T-cell (primary cell): ENCODE measurements at regions of chr10 and their contacts with region 1.

Region 1: DNA sequence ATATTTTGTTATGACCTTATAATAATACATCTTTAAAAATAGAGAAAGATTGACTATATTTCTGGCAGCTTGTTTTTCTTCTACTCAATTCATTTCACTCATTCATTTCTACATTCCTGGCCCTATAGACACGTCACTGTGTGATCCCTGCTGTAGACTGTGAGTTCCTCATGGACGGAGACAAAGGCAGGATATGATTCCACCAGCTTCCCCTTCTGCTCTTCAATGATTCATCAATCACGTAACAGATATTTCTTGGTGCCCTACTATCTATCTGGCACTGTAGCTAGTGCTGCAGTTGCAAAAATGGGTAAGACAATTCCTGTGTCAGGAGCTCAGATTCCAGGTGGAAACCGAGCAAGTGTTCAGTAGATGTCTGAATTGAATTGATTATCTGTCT is 415.0 kb downstream of the SFMBT2 start:
- DNase-seq: no peak
- ATAC-seq: no peak
- H3K4me3 ChIP-seq: no peak overlapping the region
- H3K4me3 Mint-ChIP-seq: no peak overlapping the region
- H3K27ac ChIP-seq: no peak overlapping the region
- H3K27ac Mint-ChIP-seq: no peak overlapping the region
- H3K4me1 ChIP-seq: peaks cover 0 to 13% of the 10 kb centered on the region in 2 experiments
- H3K4me1 Mint-ChIP-seq: peaks cover 2 to 4% (median 4%) of the 10 kb centered on the region in 3 donors
- H3K27me3 ChIP-seq: no peaks in the 10 kb centered on the region
- H3K27me3 Mint-ChIP-seq: peaks cover 6 to 7% of the 10 kb centered on the region in 2 donors

Region 2: DNA sequence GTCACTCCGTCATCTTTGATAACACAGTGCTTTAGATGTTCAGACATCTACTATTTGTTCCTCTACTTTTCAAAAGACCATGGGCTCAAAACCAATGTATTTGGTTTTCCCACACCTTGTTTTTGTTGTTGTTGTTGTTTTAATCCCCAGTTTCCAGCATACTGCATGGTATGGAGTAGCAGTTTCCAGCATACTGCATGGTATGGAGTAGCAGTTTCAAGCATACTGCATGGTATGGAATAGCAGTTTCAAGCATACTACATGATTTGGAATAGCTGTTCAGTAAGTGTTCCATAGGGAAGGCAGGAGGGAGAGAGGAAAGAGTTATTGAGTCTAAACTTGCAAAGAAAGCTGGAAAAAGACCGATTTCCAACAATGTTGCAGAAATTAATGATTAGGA is 101.4 kb before region 1 on chr10:
- CTCF ChIA-PET with region 1: no interaction called
- POLR2A ChIA-PET with region 1: interaction called in 1 of 2 experiments, 10 read pairs
- DNase-seq: no peak
- ATAC-seq: no peak
- H3K4me3 ChIP-seq: no peak overlapping the region
- H3K4me3 Mint-ChIP-seq: no peak overlapping the region
- H3K27ac ChIP-seq: no peak overlapping the region
- H3K27ac Mint-ChIP-seq: no peak overlapping the region
- H3K4me1 ChIP-seq: no peaks in the 10 kb centered on the region
- H3K4me1 Mint-ChIP-seq: no peaks in the 10 kb centered on the region
- H3K27me3 ChIP-seq: no peaks in the 10 kb centered on the region
- H3K27me3 Mint-ChIP-seq: peaks cover 6 to 13% of the 10 kb centered on the region in 2 donors

Region 3: DNA sequence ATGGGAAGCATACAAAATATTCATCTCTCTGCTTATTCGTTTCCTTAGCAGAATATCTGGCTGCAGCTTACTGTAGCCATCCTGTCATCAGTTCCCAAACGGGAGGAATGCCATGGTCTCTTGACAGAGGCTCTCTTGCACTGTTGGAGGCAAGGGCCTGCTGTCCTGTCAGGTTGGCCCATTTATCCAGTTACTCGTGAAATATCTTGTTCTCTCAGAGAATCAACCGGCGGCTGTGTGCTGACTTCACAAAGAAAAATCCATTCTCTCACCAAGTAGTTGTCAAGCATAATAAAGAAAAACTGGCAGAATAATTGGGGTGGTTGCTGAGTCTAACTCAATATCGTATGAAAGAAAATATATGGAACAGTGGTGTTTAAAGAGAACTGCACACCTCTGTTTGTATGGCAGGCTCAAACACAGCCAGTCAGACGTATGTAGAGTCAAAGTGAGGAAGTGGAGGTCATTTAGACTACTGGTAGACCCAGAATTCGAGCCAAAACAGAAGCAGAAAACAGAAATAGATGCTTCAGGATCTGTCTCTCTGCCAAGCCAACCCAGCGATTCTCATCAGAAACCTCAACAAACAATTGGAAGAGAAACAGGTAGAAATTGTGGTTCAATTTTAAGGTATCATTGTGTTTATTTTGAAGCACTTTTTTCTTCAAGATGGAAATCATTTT is 66.5 kb before region 1 on chr10:
- CTCF ChIA-PET with region 1: no interaction called
- POLR2A ChIA-PET with region 1: no interaction called
- DNase-seq: peak in 1 of 35 experiments; percentile 42
- ATAC-seq: no peak
- H3K4me3 ChIP-seq: no peak overlapping the region
- H3K4me3 Mint-ChIP-seq: no peak overlapping the region
- H3K27ac ChIP-seq: peak overlapping the region; percentile 84
- H3K27ac Mint-ChIP-seq: peak overlapping the region in 1 of 2 donors; percentile 29
- H3K4me1 ChIP-seq: peaks cover 32 to 33% of the 10 kb centered on the region in 2 experiments
- H3K4me1 Mint-ChIP-seq: peaks cover 34 to 49% (median 47%) of the 10 kb centered on the region in 3 donors
- H3K27me3 ChIP-seq: no peaks in the 10 kb centered on the region
- H3K27me3 Mint-ChIP-seq: peaks cover 0 to 12% of the 10 kb centered on the region in 2 donors

Region 4: GRCh38 chr10:6980353-6980752 is 15.5 kb before region 1 on chr10:
- CTCF ChIA-PET with region 1: no interaction called
- POLR2A ChIA-PET with region 1: interaction called in 1 of 2 experiments, 11 read pairs
- DNase-seq: no peak
- ATAC-seq: no peak
- H3K4me3 ChIP-seq: no peak overlapping the region
- H3K4me3 Mint-ChIP-seq: no peak overlapping the region
- H3K27ac ChIP-seq: no peak overlapping the region
- H3K27ac Mint-ChIP-seq: no peak overlapping the region
- H3K4me1 ChIP-seq: peaks cover 0 to 6% of the 10 kb centered on the region in 2 experiments
- H3K4me1 Mint-ChIP-seq: peaks cover 0 to 6% (median 0%) of the 10 kb centered on the region in 3 donors
- H3K27me3 ChIP-seq: no peaks in the 10 kb centered on the region
- H3K27me3 Mint-ChIP-seq: peaks cover 8 to 14% of the 10 kb centered on the region in 2 donors